ENCODE measurements at regions of chr1 and their contacts with region 1.

Region 1: DNA sequence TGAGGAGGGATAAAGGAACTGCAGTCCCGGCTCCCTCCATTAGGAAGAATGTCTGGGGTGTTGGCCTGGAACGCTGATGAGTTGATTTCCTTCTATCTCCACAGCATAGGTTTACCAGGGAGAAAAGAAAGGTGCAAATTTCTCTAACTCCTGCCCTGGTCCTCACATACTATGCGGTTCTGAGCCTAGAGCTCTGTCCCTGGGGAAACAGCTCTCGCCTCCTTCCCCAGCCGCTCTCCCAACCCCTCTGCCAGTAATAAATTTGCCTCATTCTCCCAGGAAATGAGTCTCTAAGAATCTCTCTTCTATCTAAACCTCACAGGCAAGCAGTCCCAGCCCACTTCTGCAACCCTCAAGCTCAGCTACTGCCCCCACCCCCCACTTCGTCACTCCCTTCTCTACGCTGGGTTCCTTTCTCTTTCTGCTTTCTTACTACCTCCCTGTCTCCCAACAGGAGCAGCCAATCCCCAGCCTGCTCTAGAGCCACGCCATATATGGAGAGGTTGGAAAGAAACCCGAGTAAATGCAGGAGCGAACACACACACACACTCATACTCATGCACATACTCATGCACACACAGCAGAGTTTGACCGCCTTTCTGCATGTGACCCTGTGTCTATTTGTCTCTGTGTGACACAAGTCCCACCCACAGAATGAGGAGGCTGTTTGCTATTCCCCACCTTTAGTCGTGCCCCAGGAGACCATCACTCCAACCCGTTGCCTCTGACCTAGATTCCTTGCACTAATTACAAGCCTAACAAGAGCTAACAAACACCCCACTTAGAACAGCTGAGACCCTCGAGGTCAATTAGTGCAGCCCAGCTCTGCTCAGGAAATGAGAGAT is 13.4 kb downstream of the PLEKHO1 start:
- DNase-seq: no peak
- ATAC-seq: no peak
- H3K4me3 Mint-ChIP-seq: no peak overlapping the region
- H3K27ac Mint-ChIP-seq: peak overlapping the region; percentile 50
- H3K4me1 Mint-ChIP-seq: peaks cover 68% of the 10 kb centered on the region
- H3K27me3 Mint-ChIP-seq: no peaks in the 10 kb centered on the region

Region 2: GRCh38 chr1:149937060-149937705 is 225.9 kb before region 1 on chr1:
- CTCF ChIA-PET with region 1: no interaction called
- DNase-seq: no peak
- ATAC-seq: no peak
- H3K4me3 Mint-ChIP-seq: no peak overlapping the region
- H3K27ac Mint-ChIP-seq: peak overlapping the region; percentile 77
- H3K4me1 Mint-ChIP-seq: peaks cover 26% of the 10 kb centered on the region
- H3K27me3 Mint-ChIP-seq: no peaks in the 10 kb centered on the region

Region 3: DNA sequence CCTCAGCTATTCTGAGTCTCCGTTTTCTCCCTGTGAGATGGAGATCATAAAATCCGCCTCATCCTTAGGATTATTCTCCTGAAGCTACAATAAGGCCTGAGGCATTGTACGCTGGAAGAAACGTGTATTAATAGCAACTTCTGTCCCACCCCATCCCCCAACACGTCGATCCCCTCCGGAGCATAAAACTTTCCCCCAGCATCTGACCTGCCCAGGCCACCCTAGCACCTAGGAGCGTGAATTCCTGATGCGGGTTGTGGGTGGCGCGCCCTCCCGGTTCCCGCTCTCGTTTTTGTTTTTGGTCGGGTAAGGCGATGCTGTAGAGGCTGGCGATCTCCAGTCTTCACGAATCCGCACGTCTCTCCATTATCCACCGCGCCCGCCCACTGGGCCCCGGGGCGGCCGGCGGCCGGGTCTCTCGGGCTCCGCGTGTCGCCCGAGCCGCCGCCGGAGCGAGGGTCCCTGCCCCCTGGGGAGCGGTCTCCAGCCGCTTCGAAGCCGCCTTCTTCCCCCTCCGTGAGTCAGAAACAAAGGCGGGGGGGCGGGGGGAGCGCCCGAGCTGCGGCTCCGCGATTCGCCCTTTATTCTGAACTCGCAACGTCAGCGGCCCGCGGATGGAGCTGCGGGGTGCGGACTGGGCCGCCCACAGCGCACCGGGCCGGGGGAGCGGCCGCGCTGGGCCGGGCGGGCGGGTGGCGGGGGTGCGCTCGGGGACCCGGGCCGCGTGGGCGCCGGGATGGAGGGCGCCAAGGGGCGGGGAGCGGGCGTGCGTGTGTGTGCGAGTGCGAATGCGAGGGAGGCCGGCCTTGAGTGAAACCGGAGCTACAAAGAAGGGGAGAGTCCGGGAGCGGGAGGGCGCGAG is 13.6 kb before region 1 on chr1 and contains the start of gene PLEKHO1:
- CTCF ChIA-PET with region 1: interaction called, 44 read pairs
- DNase-seq: peak; percentile 89
- ATAC-seq: peak; percentile 82
- H3K4me3 Mint-ChIP-seq: peak within 1 kb of the TSS; percentile 86
- H3K27ac Mint-ChIP-seq: peak within 1 kb of the TSS; percentile 91
- H3K4me1 Mint-ChIP-seq: peaks cover 66% of the 10 kb centered on the region
- H3K27me3 Mint-ChIP-seq: peaks cover 5% of the 10 kb centered on the region
- total RNA-seq, gene PLEKHO1: 98.2 to 128 TPM

Region 4: DNA sequence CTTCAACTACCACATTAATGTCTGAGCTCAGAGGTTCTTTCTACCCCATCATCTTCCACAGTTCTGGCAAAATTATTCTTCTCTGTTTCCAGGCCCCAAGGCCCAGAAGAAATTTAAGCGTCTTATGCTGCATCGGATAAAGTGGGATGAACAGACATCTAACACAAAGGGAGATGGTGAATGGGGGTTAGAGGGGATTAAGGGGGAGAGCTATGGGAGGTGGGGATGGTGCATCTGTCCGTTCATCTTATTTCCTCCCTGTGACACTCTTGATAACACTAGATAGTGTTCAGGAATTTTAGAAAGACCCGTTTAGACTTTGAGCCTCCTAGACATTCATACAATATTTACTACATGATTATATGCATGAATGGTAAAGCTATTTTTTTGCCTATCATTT is 183.2 kb after region 1 on chr1:
- CTCF ChIA-PET with region 1: no interaction called
- DNase-seq: no peak
- ATAC-seq: no peak
- H3K4me3 Mint-ChIP-seq: no peak overlapping the region
- H3K27ac Mint-ChIP-seq: no peak overlapping the region
- H3K4me1 Mint-ChIP-seq: no peaks in the 10 kb centered on the region
- H3K27me3 Mint-ChIP-seq: no peaks in the 10 kb centered on the region